Motor neuron (in vitro differentiated cells): ENCODE measurements at regions of chr9 and their contacts with region 1.

Region 1: DNA sequence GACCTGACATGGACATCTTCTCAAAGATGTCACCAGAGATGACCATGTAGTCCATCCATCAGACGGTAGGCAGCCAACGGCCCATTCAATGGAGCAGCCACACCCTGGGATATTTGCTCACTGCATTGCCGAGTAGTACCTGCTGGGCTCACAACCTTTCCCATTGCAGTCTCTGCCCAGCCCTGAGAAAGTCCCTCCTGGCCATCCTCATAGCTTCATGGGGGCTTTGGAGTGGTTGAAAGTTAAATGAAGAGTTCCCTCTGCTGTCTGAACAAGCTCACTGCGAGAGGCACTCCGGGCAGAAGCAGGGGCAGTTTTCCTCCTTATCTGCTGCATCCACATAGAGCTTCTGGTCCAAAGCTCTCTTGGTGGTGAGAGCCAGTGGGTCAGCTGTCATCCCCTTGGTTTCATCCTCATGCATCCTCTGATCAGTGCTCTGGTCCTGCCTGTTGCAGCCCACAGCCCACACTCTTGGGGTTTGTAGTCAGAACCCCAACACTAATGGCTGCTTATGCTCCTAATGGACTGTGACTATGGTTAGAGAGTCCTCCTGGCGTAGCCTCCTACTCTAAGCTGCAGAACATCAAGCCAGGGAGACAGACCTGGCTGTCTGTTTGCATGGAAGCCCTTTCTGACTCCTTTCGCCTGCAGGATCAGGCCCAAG is 23.4 kb downstream of the TNFSF8 start:
- ATAC-seq: peak in 7 of 8 experiments; percentile 30 to 71 (median 51)
- H3K4me3 ChIP-seq: no peak overlapping the region
- H3K27ac ChIP-seq: no peak overlapping the region
- H3K4me1 ChIP-seq: peaks cover 7 to 8% of the 10 kb centered on the region in 2 donors

Region 2: DNA sequence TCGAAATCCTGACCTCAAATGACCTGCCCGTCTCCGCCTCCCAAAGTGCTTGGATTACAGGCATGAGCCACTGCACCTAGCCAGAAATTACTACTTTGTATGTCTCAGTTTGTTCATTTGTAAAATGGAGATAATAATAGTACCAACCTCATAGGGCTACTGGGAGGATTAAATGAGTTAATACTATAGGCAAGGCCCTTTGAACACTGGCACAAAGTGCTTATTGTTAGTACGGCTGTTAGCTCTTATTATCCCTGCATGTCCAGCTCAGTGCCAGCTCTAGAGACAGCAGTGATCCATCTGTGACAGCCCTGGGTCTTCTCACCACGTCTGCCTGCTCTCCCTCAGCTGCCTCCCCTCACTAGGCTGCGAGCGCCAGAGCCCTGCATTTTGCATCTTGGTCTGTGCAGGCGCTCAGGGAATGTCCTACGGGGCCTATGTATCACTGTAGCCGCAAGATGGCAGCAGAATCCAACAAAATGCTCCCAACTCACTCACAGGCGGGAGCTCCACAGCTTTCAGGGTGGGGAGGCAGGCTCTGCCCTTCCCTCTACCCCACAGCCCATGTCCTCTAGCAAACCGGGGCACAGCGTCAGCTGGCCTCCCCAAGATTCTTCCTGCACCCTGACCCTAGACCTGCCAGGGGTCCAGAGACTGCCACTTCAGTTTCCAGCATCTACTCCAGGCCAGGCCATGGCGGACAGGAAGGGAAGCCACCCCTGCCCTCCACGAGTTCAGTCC is 501.6 kb before region 1 on chr9:
- in situ Hi-C with region 1: loop called in 1 of 9 experiments (anchors 25 kb)
- ATAC-seq: peak; percentile 85 to 97 (median 92)
- H3K4me3 ChIP-seq: no peak overlapping the region
- H3K27ac ChIP-seq: no peak overlapping the region
- H3K4me1 ChIP-seq: peaks cover 0 to 13% of the 10 kb centered on the region in 2 donors

Region 3: GRCh38 chr9:114681594-114682332 is 225.3 kb before region 1 on chr9 and contains the start of gene TEX48:
- in situ Hi-C with region 1: loop called in 2 of 9 experiments (anchors 10 to 25 kb)
- ATAC-seq: peak in 7 of 8 experiments; percentile 33 to 92 (median 53)
- H3K4me3 ChIP-seq: no peak within 1 kb of the TSS
- H3K27ac ChIP-seq: no peak within 1 kb of the TSS
- H3K4me1 ChIP-seq: peaks cover 15 to 18% of the 10 kb centered on the region in 2 donors
- total RNA-seq, gene TEX48: not detected

Region 4: GRCh38 chr9:114718801-114719221 is 188.2 kb before region 1 on chr9:
- in situ Hi-C with region 1: loop called in 1 of 9 experiments (anchors 10 kb)
- ATAC-seq: peak in 1 of 8 experiments; percentile 31
- H3K4me3 ChIP-seq: no peak overlapping the region
- H3K27ac ChIP-seq: no peak overlapping the region
- H3K4me1 ChIP-seq: peaks cover 5 to 15% of the 10 kb centered on the region in 2 donors

Region 5: GRCh38 chr9:114738581-114739316 is 168.3 kb before region 1 on chr9:
- in situ Hi-C with region 1: loop called in 1 of 9 experiments (anchors 5 kb)
- ATAC-seq: peak in 6 of 8 experiments; percentile 31 to 92 (median 82)
- H3K4me3 ChIP-seq: no peak overlapping the region
- H3K27ac ChIP-seq: no peak overlapping the region
- H3K4me1 ChIP-seq: no peaks in the 10 kb centered on the region